ENCODE measurements at regions of chr7 and their contacts with region 1.

Region 1: GRCh38 chr7:46191776-46192175 is 270.7 kb upstream of the IGFBP3 start:
- DNase-seq: no peak
- H3K4me3 ChIP-seq: no peak overlapping the region
- H3K27ac ChIP-seq: no peak overlapping the region
- H3K4me1 ChIP-seq: no peaks in the 10 kb centered on the region
- H3K27me3 ChIP-seq: no peaks in the 10 kb centered on the region
- CTCF ChIP-seq: no peak
- POLR2A ChIP-seq: no peak

Region 2: DNA sequence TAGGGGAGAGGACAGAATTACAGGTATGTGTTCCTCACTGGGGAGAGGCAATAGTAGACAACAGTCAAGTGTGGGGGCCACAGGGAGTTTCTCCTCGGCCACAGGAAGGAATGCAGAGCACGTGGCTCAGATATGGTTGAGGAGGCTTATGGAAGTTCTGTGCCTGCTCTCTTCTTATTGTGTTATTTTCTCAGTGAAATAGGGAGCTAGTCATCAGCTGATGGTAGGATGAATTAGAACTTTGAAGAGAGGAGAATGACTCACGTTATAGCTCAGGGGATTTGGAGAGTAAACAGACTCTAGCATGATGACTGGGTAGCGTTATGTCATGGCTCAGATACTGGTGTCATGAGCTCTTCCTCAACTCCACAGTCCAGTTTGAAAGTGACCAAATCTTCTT is 37.6 kb after region 1 on chr7:
- intact Hi-C with region 1: loop called (anchors 1 kb)
- DNase-seq: no peak
- H3K4me3 ChIP-seq: no peak overlapping the region
- H3K27ac ChIP-seq: no peak overlapping the region
- H3K4me1 ChIP-seq: no peaks in the 10 kb centered on the region
- H3K27me3 ChIP-seq: no peaks in the 10 kb centered on the region
- CTCF ChIP-seq: no peak
- POLR2A ChIP-seq: no peak